AG04449 (cell line): ENCODE measurements at regions of chr11 and their contacts with region 1.

Region 1: GRCh38 chr11:77198440-77198849 is 70.4 kb downstream of the MYO7A start:
- DNase-seq: no peak
- H3K4me3 ChIP-seq: no peak overlapping the region
- CTCF ChIP-seq: peak; percentile 12

Region 2: GRCh38 chr11:77187776-77188632 is 10.4 kb before region 1 on chr11:
- CTCF ChIA-PET with region 1: interaction called, 80 read pairs
- POLR2A ChIA-PET with region 1: no interaction called
- DNase-seq: peak; percentile 21
- H3K4me3 ChIP-seq: no peak overlapping the region
- CTCF ChIP-seq: peak; percentile 86

Region 3: DNA sequence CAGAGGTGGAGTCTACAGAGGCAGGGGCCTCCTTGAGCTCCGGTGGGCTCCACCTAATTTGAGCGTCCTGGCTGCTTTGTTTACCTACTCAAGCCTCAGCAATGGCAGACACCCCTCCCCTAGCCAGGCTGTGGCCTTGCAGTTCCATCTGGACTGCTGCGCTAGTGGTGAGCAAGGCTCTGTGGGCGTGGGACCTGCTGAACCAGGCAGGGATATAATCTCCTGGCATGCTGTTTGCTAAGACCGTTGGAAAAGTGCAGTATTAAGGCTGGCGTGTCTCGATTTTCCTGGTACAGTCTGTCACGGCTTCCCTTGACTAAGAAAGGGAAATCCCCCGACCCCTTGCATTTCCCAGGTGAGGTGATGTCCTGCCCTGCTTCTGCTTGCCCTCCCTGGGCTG is 25.4 kb after region 1 on chr11:
- CTCF ChIA-PET with region 1: no interaction called
- POLR2A ChIA-PET with region 1: no interaction called
- DNase-seq: no peak
- H3K4me3 ChIP-seq: no peak overlapping the region
- CTCF ChIP-seq: no peak

Region 4: GRCh38 chr11:77425346-77425745 is 226.9 kb after region 1 on chr11:
- CTCF ChIA-PET with region 1: no interaction called
- POLR2A ChIA-PET with region 1: no interaction called
- DNase-seq: no peak
- H3K4me3 ChIP-seq: no peak overlapping the region
- CTCF ChIP-seq: no peak

Region 5: GRCh38 chr11:77542296-77542695 is 343.9 kb after region 1 on chr11:
- CTCF ChIA-PET with region 1: interaction called, 170 read pairs
- POLR2A ChIA-PET with region 1: no interaction called
- DNase-seq: peak; percentile 16
- H3K4me3 ChIP-seq: no peak overlapping the region
- CTCF ChIP-seq: no peak

Region 6: GRCh38 chr11:77557554-77557953 is 359.1 kb after region 1 on chr11:
- CTCF ChIA-PET with region 1: interaction called, 24 read pairs
- POLR2A ChIA-PET with region 1: no interaction called
- DNase-seq: no peak
- H3K4me3 ChIP-seq: no peak overlapping the region
- CTCF ChIP-seq: no peak

Region 7: GRCh38 chr11:77771135-77771534 is 572.7 kb after region 1 on chr11:
- CTCF ChIA-PET with region 1: no interaction called
- POLR2A ChIA-PET with region 1: no interaction called
- DNase-seq: no peak
- H3K4me3 ChIP-seq: no peak overlapping the region
- CTCF ChIP-seq: no peak